A549 (cell line): ENCODE measurements at regions of chr12 and their contacts with region 1.

Region 1: GRCh38 chr12:67268896-67269631 is at the start of gene CAND1:
- DNase-seq: peak; percentile 95 to 99
- ATAC-seq: peak; percentile 79 to 87
- H3K4me3 ChIP-seq: peak within 1 kb of the TSS; percentile 88
- H3K27ac ChIP-seq: peak within 1 kb of the TSS; percentile 94 to 99
- H3K4me1 ChIP-seq: peaks cover 31% of the 10 kb centered on the region
- CTCF ChIP-seq: 0 out of 3 replicates have a peak, but pooled peaks have one; percentile 6
- EP300 ChIP-seq: no peak
- POLR2A ChIP-seq: peak; percentile 73
- RAD21 ChIP-seq: 0 out of 5 replicates have a peak, but pooled peaks of 1 of the 2 experiments have one; percentile 15
- polyA plus RNA-seq, gene CAND1: 185 and 189 TPM in 2 replicates

Region 2: GRCh38 chr12:66301944-66302826 is 966.9 kb before region 1 on chr12 and contains the start of gene HELB:
- CTCF ChIA-PET with region 1: no interaction called
- POLR2A ChIA-PET with region 1: interaction called, 10 read pairs
- DNase-seq: peak; percentile 90 to 98
- ATAC-seq: peak; percentile 98 to 99
- H3K4me3 ChIP-seq: peak within 1 kb of the TSS; percentile 63
- H3K27ac ChIP-seq: peak within 1 kb of the TSS; percentile 79 to 91
- H3K4me1 ChIP-seq: peaks cover 12% of the 10 kb centered on the region; the same call in 2 of the 3 replicates
- CTCF ChIP-seq: no peak
- EP300 ChIP-seq: no peak
- POLR2A ChIP-seq: peak; percentile 85
- RAD21 ChIP-seq: no peak
- polyA plus RNA-seq, gene HELB: 5.0 and 5.6 TPM in 2 replicates

Region 3: DNA sequence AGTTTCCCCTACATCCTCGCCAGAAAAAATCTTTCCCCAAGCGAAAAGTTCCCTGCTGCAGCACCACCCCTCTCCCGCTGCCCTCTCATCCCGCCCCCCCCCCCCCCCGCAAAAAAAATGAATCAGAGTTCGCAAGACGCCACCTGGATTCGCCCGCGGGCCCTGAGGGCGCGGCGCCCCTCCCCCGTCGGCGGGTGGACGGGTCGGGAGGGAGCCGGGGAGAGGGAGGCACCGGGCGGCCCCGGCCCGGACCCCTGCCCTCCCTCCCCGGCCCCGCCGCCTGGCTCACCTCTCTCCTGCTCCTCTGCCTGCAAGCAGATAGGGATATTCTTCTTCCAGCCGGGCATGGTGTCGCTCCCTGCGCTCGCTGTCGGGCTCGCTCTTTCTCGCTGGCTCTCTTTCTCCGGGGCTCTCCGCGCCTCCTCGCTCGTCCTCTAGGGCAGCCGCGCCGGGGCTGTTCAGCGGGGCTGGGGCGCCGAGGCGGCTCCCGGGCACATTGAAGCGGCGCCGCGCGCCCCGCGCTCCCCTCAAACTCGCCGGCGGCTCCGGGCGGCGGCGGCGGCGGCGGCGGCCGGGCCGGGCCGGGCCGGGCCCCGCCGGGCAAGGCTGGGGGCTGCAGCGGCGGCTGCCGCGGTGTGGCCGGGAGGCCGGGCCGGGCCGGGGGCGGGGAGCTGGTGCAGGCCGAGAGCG is 200.2 kb before region 1 on chr12:
- CTCF ChIA-PET with region 1: no interaction called
- POLR2A ChIA-PET with region 1: interaction called, 14 read pairs
- DNase-seq: peak; percentile 37 to 67
- ATAC-seq: peak; percentile 80 to 81
- H3K4me3 ChIP-seq: peak overlapping the region; percentile 75
- H3K27ac ChIP-seq: peak overlapping the region; percentile 89 to 91
- H3K4me1 ChIP-seq: peaks cover 13% of the 10 kb centered on the region
- CTCF ChIP-seq: no peak
- EP300 ChIP-seq: no peak
- POLR2A ChIP-seq: peak; percentile 45
- RAD21 ChIP-seq: no peak

Region 4: DNA sequence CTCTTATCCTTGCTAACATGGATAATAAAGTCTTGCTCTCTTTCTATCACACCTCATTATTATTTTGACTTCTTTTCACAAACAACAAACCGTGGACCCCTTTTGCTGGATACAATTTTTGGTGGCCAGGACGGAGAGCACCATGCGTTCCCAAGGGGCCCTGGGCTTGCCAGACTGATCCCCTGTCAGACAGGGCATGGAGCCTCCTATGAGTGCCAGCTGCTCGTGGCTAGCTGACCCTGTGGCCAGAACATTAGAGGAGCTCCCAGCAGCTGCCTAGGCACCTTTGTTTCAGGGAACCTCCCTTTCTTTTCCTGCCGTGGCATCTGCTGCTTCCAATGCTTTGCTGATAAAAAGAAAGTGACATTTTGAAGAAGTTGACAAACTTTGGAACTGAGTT is 12.4 kb before region 1 on chr12:
- CTCF ChIA-PET with region 1: interaction called, 5 read pairs
- POLR2A ChIA-PET with region 1: interaction called, 14 read pairs
- DNase-seq: no peak
- ATAC-seq: no peak; a peak in 1 of 6 replicates
- H3K4me3 ChIP-seq: no peak overlapping the region
- H3K27ac ChIP-seq: no peak overlapping the region
- H3K4me1 ChIP-seq: no peaks in the 10 kb centered on the region
- CTCF ChIP-seq: no peak
- EP300 ChIP-seq: no peak
- POLR2A ChIP-seq: no peak
- RAD21 ChIP-seq: no peak

Region 5: GRCh38 chr12:67472539-67472938 is 203.5 kb after region 1 on chr12:
- CTCF ChIA-PET with region 1: no interaction called
- POLR2A ChIA-PET with region 1: no interaction called
- DNase-seq: no peak
- ATAC-seq: no peak
- H3K4me3 ChIP-seq: no peak overlapping the region
- H3K27ac ChIP-seq: no peak overlapping the region
- H3K4me1 ChIP-seq: no peaks in the 10 kb centered on the region
- CTCF ChIP-seq: no peak
- EP300 ChIP-seq: no peak
- POLR2A ChIP-seq: no peak
- RAD21 ChIP-seq: no peak